KBM-7 (cell line): ENCODE measurements at regions of chr11 and their contacts with region 1.

Region 1: DNA sequence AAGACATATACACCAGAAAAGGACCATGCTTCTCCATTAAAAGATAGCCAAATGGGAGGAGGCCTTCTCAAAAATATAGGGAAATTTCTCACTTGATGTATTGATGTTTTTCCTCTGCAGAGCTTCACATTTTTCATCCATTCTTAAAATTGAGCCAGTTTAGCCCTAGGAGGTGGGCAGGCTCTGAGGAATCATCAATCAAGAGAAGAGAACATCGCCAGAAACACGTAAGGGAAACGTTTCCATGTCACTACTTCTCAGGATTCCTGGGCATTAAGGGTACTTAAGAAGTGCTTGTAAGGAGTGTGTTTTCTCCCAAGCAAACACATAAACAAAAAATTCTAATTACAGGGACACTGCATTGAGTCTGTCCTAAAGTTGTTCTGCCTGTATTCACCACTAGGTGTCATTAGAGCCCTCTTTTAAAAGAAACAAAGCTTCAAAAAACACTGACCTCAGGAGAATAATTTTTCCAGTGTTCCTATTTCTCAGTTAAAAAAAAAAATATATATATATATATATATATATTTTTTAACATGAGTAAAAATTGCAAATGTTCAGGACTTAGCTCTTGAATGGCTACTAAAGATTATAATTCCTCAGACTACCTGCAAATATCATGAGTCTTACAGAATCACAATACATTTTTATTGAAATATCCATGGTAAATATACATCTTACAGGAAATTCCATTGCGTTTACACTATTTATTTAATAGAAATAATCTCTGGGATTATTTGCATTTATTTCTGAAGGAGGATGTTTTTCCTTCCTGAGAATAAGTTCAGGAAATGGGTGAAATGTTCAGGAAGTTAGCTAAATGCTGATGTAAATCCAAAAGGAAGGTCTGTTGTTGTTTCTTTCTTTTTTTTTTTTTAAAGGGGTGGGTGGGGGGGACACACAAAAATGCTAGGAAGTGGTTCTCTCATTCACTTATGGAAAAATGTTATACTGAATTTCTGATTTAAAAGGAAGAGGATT is 16.0 kb downstream of the FZD4 start:
- DNase-seq: peak; percentile 68

Region 2: DNA sequence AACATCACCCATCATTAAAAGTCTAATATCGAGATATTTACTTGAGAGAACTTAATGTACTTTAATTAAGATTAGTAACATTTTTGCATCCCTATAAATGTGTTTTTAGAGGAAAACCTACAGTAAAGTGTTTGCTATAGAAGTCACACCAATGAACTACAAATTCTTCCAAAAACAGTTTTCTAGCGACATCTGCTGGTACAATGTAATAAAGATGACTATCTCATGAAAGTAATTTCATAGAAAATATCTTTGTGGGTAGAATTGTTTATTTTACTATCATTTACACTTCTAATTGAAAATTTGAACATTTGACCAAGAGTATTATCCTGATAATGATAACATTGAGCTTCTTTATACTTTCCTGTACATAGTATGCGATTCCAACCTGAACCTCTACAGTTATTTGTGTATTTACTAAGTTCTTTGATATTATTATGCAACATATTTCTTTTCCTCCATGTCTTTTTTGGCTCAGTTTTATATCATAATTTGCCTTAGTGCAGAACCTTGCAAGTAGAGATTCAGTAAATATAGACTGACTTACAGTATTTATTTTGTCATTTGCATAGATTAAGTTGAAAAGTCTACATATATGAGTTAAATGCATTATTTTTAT is 351.2 kb after region 1 on chr11:
- in situ Hi-C with region 1: loop called (anchors 25 kb)
- DNase-seq: peak; percentile 53